ENCODE measurements at regions of chr9 and their contacts with region 1.

Region 1: GRCh38 chr9:76311586-76311985 is 82.6 kb downstream of the RFK start:
- DNase-seq: no peak
- ATAC-seq: no peak
- H3K4me3 ChIP-seq: no peak overlapping the region
- H3K27ac ChIP-seq: no peak overlapping the region
- H3K4me1 ChIP-seq: no peaks in the 10 kb centered on the region
- H3K27me3 ChIP-seq: no peaks in the 10 kb centered on the region
- CTCF ChIP-seq: no peak
- EP300 ChIP-seq: no peak
- POLR2A ChIP-seq: no peak
- RAD21 ChIP-seq: no peak

Region 2: DNA sequence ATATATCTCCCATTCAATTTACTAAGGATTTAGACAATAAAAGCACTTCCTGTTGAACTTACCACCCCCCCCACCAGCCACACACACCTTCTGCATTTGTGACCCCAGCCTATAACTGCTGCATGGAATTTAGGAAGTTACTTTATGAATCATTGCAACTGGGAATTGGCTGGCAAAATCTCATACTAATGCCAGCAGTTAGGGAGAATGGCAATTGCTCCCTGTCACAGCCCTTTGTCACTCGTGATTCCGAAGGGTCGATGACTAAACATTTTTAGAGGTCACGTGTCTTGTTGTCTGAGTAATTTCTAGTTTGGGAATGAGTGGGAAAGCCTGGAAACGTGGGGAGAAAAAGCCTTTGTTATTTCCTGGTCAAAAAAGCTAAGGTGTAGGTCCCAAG is 406.0 kb after region 1 on chr9:
- CTCF ChIA-PET with region 1: no interaction called
- POLR2A ChIA-PET with region 1: no interaction called
- in situ Hi-C with region 1: no loop called
- intact Hi-C with region 1: loop called (anchors 10 kb)
- DNase-seq: no peak
- ATAC-seq: no peak
- H3K4me3 ChIP-seq: no peak overlapping the region
- H3K27ac ChIP-seq: no peak overlapping the region
- H3K4me1 ChIP-seq: no peaks in the 10 kb centered on the region
- H3K27me3 ChIP-seq: peaks cover 0 to 4% of the 10 kb centered on the region in 2 experiments; a peak in 2 of 5 replicates
- CTCF ChIP-seq: no peak
- EP300 ChIP-seq: no peak
- POLR2A ChIP-seq: no peak
- RAD21 ChIP-seq: no peak

Measured in K562 (cell line).